ENCODE measurements at regions of chr11 and their contacts with region 1.

Region 1: GRCh38 chr11:17354601-17354991 is 3.0 kb downstream of the NCR3LG1 start:
- DNase-seq: peak; percentile 87
- ATAC-seq: peak; percentile 45
- H3K4me3 Mint-ChIP-seq: peak overlapping the region; percentile 87
- H3K27ac Mint-ChIP-seq: peak overlapping the region; percentile 34
- H3K4me1 Mint-ChIP-seq: peaks cover 34% of the 10 kb centered on the region
- H3K27me3 Mint-ChIP-seq: no peaks in the 10 kb centered on the region
- CTCF ChIP-seq: peak; percentile 80

Region 2: GRCh38 chr11:17276236-17277023 is 78.2 kb before region 1 on chr11 and contains the start of gene NUCB2:
- CTCF ChIA-PET with region 1: interaction called, 5 read pairs
- POLR2A ChIA-PET with region 1: interaction called, 7 read pairs
- intact Hi-C with region 1: loop called (anchors 5 kb)
- DNase-seq: peak; percentile 97
- ATAC-seq: peak; percentile 88
- H3K4me3 Mint-ChIP-seq: peak within 1 kb of the TSS; percentile 82
- H3K27ac Mint-ChIP-seq: peak within 1 kb of the TSS; percentile 91
- H3K4me1 Mint-ChIP-seq: peaks cover 36% of the 10 kb centered on the region
- H3K27me3 Mint-ChIP-seq: no peaks in the 10 kb centered on the region
- CTCF ChIP-seq: no peak
- total RNA-seq, gene NUCB2: 81.9 to 86.0 TPM

Region 3: GRCh38 chr11:17298302-17298701 is 56.3 kb before region 1 on chr11:
- CTCF ChIA-PET with region 1: interaction called, 7 read pairs
- POLR2A ChIA-PET with region 1: interaction called, 3 read pairs
- intact Hi-C with region 1: loop called (anchors 5 kb)
- DNase-seq: peak; percentile 86
- ATAC-seq: peak; percentile 76
- H3K4me3 Mint-ChIP-seq: peak overlapping the region; percentile 12
- H3K27ac Mint-ChIP-seq: peak overlapping the region; percentile 61
- H3K4me1 Mint-ChIP-seq: peaks cover 45% of the 10 kb centered on the region
- H3K27me3 Mint-ChIP-seq: no peaks in the 10 kb centered on the region
- CTCF ChIP-seq: no peak

Region 4: DNA sequence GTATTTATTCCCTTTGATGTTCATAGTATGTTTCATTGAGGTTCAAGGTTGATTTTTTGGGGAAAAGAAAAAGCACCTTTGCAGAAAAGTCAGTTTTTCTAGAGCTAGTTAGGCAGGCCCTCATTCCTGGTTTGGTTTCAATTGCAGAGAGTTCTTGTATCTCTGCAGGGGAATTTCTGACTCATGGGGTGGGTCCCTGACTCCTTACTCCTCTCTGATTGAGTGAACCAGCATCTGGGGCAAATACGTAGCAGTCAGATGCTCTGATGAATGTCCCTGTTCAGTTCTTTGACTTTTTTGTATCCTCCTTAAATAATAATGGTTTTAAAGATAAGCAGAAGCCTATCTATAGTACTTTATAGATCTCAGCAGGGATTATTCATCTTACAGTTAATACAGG is 10.7 kb before region 1 on chr11:
- CTCF ChIA-PET with region 1: interaction called, 13 read pairs
- POLR2A ChIA-PET with region 1: no interaction called
- intact Hi-C with region 1: no loop called
- DNase-seq: peak; percentile 85
- ATAC-seq: peak; percentile 98
- H3K4me3 Mint-ChIP-seq: no peak overlapping the region
- H3K27ac Mint-ChIP-seq: peak overlapping the region; percentile 28
- H3K4me1 Mint-ChIP-seq: peaks cover 17% of the 10 kb centered on the region
- H3K27me3 Mint-ChIP-seq: no peaks in the 10 kb centered on the region
- CTCF ChIP-seq: no peak

Region 5: DNA sequence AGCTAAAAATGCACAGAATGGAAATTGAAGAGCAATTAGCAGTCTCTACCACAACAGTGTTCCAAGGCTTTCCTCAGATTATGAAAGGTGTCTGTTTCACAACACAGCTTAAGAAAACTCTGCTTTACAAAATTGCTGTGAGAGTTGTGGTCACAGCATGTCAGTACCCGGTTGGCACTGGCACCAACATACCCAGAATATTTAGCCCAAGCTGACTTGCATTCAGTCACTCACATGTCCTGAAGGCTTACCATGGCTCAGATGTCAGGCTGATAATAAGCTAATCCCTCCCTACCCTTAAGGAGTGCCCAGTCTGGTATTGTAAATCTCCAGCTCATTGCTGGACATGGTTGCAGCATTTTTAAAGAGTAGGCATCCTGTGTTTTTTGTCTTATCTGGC is 11.9 kb after region 1 on chr11:
- CTCF ChIA-PET with region 1: interaction called, 13 read pairs
- POLR2A ChIA-PET with region 1: interaction called, 4 read pairs
- intact Hi-C with region 1: no loop called
- DNase-seq: no peak
- ATAC-seq: no peak
- H3K4me3 Mint-ChIP-seq: no peak overlapping the region
- H3K27ac Mint-ChIP-seq: no peak overlapping the region
- H3K4me1 Mint-ChIP-seq: peaks cover 3% of the 10 kb centered on the region
- H3K27me3 Mint-ChIP-seq: no peaks in the 10 kb centered on the region
- CTCF ChIP-seq: no peak

Measured in activated CD8-positive, alpha-beta T cell treated with anti-CD3 and anti-CD28 coated beads for 36 hours (primary cell).